Breast epithelium (tissue), 4 donors: ENCODE measurements at regions of chr1 and their contacts with region 1.

Region 1: GRCh38 chr1:226121587-226122400 is 59.3 kb downstream of the H3-3A start:
- DNase-seq: peak in 1 of 2 donors; percentile 38
- H3K4me3 ChIP-seq: peak overlapping the region; percentile 57 to 76 (median 75)
- H3K27ac ChIP-seq: peak overlapping the region; percentile 91 to 94
- H3K4me1 ChIP-seq: no peaks in the 10 kb centered on the region
- H3K27me3 ChIP-seq: no peaks in the 10 kb centered on the region
- CTCF ChIP-seq: peak; percentile 25 to 93 (median 43)
- POLR2A ChIP-seq: no peak

Region 2: DNA sequence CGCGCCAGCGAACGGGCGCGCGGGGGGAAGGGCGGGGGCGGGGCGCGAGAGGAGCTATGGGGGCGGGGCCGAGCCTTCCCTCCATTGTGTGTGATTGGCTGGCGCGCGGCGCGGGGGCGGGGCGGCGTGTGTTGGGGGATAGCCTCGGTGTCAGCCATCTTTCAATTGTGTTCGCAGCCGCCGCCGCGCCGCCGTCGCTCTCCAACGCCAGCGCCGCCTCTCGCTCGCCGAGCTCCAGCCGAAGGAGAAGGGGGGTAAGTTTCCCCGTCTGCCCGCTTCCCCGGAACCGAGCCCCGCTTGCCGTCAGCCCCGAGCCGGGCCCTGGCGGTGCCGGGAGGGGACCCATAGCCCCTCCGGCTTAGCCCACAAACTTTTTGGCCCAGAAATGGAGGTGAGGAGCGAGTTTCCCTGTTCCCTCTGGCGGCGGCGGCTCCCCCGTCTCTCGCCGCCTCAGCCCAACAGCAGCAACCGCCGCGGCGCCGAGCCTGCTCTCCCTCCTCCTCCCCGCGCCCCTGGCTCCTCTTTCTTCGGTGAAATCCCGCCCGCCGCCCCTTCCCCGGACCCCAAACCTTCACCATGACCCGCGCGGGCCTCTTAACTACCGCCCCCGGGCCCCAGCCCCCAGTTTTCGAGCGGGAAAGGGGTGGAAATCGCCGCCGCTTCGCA is 59.1 kb before region 1 on chr1 and contains the start of gene H3-3A:
- intact Hi-C with region 1: loop called (anchors 5 kb)
- DNase-seq: peak; percentile 98 to 99
- H3K4me3 ChIP-seq: peak within 1 kb of the TSS; percentile 83 to 95 (median 86)
- H3K27ac ChIP-seq: peak within 1 kb of the TSS; percentile 98 to 99
- H3K4me1 ChIP-seq: peaks cover 5 to 21% of the 10 kb centered on the region in 2 donors
- H3K27me3 ChIP-seq: no peaks in the 10 kb centered on the region
- CTCF ChIP-seq: peak in 2 of 3 donors; percentile 23 to 24
- POLR2A ChIP-seq: peak; percentile 91
- total RNA-seq, gene H3-3A: 287 to 603 (median 462) TPM

Region 3: GRCh38 chr1:226201029-226201593 is 79.3 kb after region 1 on chr1:
- intact Hi-C with region 1: no loop called
- DNase-seq: no peak
- H3K4me3 ChIP-seq: no peak overlapping the region
- H3K27ac ChIP-seq: no peak overlapping the region
- H3K4me1 ChIP-seq: no peaks in the 10 kb centered on the region
- H3K27me3 ChIP-seq: no peaks in the 10 kb centered on the region
- CTCF ChIP-seq: no peak
- POLR2A ChIP-seq: no peak